Sciatic nerve (tissue), 2 donors: ENCODE measurements at regions of chr17 and their contacts with region 1.

Region 1: GRCh38 chr17:42322382-42323267 is 34.3 kb downstream of the STAT5A start:
- DNase-seq: peak; percentile 95
- ATAC-seq: peak; percentile 91

Region 2: GRCh38 chr17:42405963-42406495 is 83.4 kb after region 1 on chr17:
- intact Hi-C with region 1: loop called (anchors 5 kb)
- DNase-seq: peak; percentile 93
- ATAC-seq: peak; percentile 77

Region 3: DNA sequence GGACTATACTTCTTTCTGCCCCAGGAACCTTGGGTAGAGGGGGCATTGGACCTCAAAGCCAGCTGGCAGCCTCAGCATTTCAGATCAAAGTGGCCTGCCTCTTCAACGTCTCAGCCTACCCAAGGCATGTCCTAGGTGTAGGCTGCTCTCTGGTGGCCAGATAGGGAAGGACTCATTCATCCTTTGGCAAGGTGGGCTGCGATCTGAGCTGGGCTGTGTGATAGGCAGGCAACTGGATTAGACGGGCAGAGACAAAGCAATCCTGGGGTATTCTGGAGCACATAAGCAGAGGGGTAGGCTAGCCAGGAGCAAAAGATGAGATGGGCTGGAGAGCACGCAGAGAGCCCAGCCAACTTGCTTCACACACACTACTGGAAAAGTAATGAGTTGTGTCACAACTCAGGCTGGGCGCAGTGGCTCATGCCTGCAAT is 204.7 kb after region 1 on chr17:
- intact Hi-C with region 1: loop called (anchors 5 kb)
- DNase-seq: peak; percentile 87
- ATAC-seq: peak; percentile 85